Naive thymus-derived CD8-positive, alpha-beta T cell (primary cell): ENCODE measurements at regions of chr14 and their contacts with region 1.

Region 1: GRCh38 chr14:65847075-65847847 is 434.7 kb downstream of the FUT8 start:
- DNase-seq: peak; percentile 38 to 95 (median 82)
- ATAC-seq: peak; percentile 87 to 89
- H3K4me3 Mint-ChIP-seq: peak overlapping the region; percentile 46 to 90 (median 81)
- H3K27ac Mint-ChIP-seq: peak overlapping the region; percentile 92 to 100 (median 96)
- H3K4me1 Mint-ChIP-seq: peaks cover 40 to 90% (median 85%) of the 10 kb centered on the region in 4 donors
- H3K27me3 Mint-ChIP-seq: no peaks in the 10 kb centered on the region

Region 2: DNA sequence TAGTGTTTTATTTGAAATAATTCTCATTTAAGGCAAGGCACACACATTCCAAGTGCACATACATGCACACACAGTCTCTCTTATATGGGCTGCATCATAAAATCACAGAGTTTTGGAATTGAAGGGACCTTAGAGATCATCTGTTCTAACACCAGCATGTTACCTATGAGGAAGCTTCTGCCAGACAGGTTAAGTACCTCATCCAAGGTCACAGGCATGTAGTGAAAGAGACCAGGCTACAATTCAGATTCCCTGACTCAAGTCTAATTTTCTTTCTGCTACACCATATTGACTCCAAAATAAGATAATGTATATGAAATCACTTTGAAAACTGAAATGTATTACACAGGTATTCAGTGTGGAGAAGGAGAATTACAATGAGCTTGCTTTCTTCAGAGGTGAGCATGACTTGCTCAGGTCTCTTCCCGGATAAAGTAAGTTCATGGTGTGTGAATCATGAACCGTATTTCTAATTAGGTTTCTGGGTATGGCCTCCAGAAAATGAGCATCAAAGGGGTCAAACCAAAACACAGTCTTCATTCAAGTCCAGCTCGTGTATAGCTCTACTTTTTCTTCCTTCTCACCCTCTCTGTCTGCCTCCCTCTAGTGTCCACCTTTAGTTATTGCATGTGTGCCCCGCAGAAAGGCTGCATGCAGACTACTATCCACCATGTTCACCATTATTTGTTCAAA is 22.8 kb before region 1 on chr14:
- POLR2A ChIA-PET with region 1: interaction called, 31 read pairs
- DNase-seq: peak in 9 of 10 donors; percentile 29 to 77 (median 60)
- ATAC-seq: peak; percentile 93
- H3K4me3 Mint-ChIP-seq: peak overlapping the region in 1 of 10 donors; percentile 30
- H3K27ac Mint-ChIP-seq: peak overlapping the region in 4 of 10 donors; percentile 7 to 76 (median 36)
- H3K4me1 Mint-ChIP-seq: peaks cover 9 to 32% (median 17%) of the 10 kb centered on the region in 4 donors
- H3K27me3 Mint-ChIP-seq: no peaks in the 10 kb centered on the region

Region 3: DNA sequence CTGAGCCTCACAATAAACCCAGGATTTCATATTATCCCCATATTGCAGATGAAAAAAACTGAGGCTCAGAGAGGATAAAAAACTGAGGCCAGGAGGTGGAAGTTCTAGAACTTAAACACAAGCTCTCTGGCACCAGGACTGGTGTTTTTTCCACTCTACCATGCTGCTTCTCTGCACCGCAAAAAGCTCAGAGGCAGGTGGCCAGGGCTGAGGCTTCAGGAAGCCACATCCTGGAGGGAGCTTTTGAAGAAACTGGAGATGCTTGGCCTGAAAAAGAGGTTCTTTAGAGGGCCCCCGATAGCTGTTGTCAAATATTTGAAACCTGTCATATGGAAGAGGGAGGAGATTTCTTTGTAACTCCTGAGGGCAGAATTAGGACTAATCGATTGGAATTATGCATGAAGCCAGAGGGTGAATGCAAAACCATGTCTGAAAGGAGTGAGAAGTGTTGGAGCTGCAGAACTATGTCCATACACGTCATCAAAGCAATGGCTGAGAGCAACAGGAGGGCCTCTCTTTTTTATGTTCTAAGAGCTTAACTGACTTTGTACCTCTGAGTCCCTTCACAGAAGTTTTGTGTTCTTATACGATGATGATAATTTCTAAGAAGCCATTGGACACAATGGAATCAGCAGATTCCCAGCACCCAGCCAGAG is 13.8 kb after region 1 on chr14:
- POLR2A ChIA-PET with region 1: interaction called, 37 read pairs
- DNase-seq: peak in 7 of 10 donors; percentile 18 to 72 (median 52)
- ATAC-seq: peak; percentile 82 to 92
- H3K4me3 Mint-ChIP-seq: peak overlapping the region; percentile 4 to 77 (median 46)
- H3K27ac Mint-ChIP-seq: peak overlapping the region; percentile 18 to 88 (median 81)
- H3K4me1 Mint-ChIP-seq: peaks cover 46 to 77% (median 66%) of the 10 kb centered on the region in 4 donors
- H3K27me3 Mint-ChIP-seq: no peaks in the 10 kb centered on the region

Region 4: GRCh38 chr14:65879248-65880009 is 32.2 kb after region 1 on chr14:
- POLR2A ChIA-PET with region 1: interaction called, 16 read pairs
- DNase-seq: no peak
- ATAC-seq: peak in 1 of 2 donors; percentile 26
- H3K4me3 Mint-ChIP-seq: no peak overlapping the region
- H3K27ac Mint-ChIP-seq: peak overlapping the region; percentile 1 to 81 (median 52)
- H3K4me1 Mint-ChIP-seq: peaks cover 10 to 33% (median 20%) of the 10 kb centered on the region in 4 donors
- H3K27me3 Mint-ChIP-seq: no peaks in the 10 kb centered on the region

Region 5: DNA sequence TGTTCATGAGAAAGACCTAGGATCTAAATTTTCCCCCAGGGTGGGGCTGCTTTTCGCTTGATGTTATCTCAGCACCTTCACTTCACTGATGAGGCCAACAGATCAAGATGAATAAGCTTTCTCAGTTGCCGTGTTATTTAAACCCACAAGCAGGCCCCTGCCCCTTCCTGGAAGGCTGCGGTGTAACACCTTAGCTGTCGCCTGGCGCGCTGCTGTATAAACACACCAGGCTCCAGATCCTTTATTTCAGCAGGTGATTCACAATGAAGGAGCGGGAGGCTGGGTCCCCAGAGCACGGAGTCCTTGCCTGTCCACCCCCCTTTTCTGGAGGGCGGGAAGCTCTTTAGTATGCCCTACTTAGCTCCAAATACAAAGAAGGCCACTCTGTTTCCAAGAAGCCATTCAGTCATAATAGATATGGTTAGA is 80.7 kb after region 1 on chr14:
- POLR2A ChIA-PET with region 1: interaction called, 38 read pairs
- DNase-seq: peak; percentile 16 to 83 (median 64)
- ATAC-seq: peak; percentile 98
- H3K4me3 Mint-ChIP-seq: peak overlapping the region; percentile 48 to 82 (median 72)
- H3K27ac Mint-ChIP-seq: peak overlapping the region; percentile 84 to 97 (median 93)
- H3K4me1 Mint-ChIP-seq: peaks cover 34 to 76% (median 58%) of the 10 kb centered on the region in 4 donors
- H3K27me3 Mint-ChIP-seq: no peaks in the 10 kb centered on the region